ENCODE measurements at regions of chr12 and their contacts with region 1.

Region 1: GRCh38 chr12:94762259-94762942 is 112.0 kb upstream of the TMCC3 start:
- DNase-seq: peak in 1 of 2 experiments; percentile 18
- ATAC-seq: no peak; a peak in 1 of 6 replicates
- H3K4me3 ChIP-seq: no peak overlapping the region
- H3K27ac ChIP-seq: no peak overlapping the region
- H3K4me1 ChIP-seq: peaks cover 10% of the 10 kb centered on the region; the same call in 2 of the 3 replicates
- CTCF ChIP-seq: no peak
- EP300 ChIP-seq: no peak
- POLR2A ChIP-seq: no peak
- RAD21 ChIP-seq: no peak

Region 2: DNA sequence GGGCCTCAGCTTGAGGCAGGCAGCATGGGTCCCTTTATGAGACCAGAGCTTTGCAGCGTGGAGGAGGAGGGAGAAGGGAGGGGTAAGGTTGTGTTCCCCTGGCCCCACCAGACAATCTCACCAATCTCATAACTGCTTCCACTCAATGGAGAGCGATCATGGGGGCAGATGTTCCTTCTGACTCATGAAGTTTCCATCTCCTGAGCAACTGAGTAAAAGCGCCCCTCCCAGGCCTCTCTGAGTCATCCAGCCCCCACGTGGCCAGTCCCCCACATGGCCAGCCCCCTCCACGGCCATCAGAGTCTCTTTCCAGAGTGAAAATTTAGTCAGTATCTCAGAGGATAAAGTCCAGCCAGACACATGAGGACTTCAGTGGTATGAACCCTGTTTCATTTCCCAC is 653.2 kb before region 1 on chr12:
- CTCF ChIA-PET with region 1: no interaction called
- POLR2A ChIA-PET with region 1: no interaction called
- DNase-seq: no peak
- ATAC-seq: no peak
- H3K4me3 ChIP-seq: no peak overlapping the region
- H3K27ac ChIP-seq: no peak overlapping the region
- H3K4me1 ChIP-seq: peaks cover 7% of the 10 kb centered on the region; the same call in 1 of the 3 replicates
- CTCF ChIP-seq: no peak
- EP300 ChIP-seq: no peak
- POLR2A ChIP-seq: no peak
- RAD21 ChIP-seq: no peak

Region 3: GRCh38 chr12:94545935-94546771 is 216.2 kb before region 1 on chr12:
- CTCF ChIA-PET with region 1: interaction called, 15 read pairs
- POLR2A ChIA-PET with region 1: no interaction called
- DNase-seq: peak; percentile 70 to 75
- ATAC-seq: peak; percentile 90 to 98
- H3K4me3 ChIP-seq: no peak overlapping the region
- H3K27ac ChIP-seq: no peak overlapping the region
- H3K4me1 ChIP-seq: no peaks in the 10 kb centered on the region
- CTCF ChIP-seq: peak; percentile 56
- EP300 ChIP-seq: no peak
- POLR2A ChIP-seq: no peak
- RAD21 ChIP-seq: peak; percentile 79 to 91

Region 4: DNA sequence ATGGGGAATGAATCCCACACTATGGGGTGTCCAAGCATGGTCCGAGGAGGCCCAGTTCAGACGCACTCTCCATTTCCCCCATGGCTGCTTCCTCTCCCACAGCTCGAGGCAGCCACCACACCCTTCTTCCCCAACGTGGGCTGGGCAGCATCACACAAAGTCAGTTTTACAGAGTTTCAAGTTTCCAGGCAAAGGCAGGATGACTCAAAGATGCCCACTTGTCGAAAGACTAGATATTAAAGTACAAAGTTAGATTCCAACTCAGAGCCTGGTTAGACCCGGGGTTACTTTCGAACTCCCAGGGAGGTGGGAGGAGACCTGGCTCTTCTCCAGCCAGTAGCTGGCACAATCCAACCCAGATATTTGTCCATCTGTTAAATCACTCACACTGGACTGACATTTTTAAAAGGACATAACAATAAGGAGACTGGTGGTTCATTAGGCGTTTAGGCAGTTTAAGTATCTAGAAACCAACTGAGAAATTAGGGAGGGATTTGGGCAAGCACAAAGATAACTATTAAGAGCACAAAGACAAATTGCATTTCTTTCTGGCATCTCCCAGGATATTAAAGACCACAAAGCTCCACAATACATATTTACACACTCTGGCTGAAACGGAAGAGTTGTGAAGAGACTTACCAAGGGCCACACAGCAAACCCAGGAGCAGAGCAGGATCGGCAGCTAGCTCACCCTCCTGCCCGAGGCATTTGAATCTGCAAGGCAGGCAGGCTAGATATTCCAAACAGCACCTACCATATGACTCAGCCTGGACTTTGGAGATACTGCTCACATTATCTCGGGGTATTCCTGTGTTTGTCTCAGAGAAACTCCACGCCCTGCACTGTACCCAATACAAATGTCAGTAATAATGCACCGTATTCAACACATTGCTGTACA is 146.9 kb before region 1 on chr12:
- CTCF ChIA-PET with region 1: no interaction called
- POLR2A ChIA-PET with region 1: no interaction called
- DNase-seq: peak; percentile 53 to 61
- ATAC-seq: peak; percentile 75 to 83
- H3K4me3 ChIP-seq: peak overlapping the region; percentile 25
- H3K27ac ChIP-seq: peak overlapping the region; percentile 57 to 81
- H3K4me1 ChIP-seq: peaks cover 35% of the 10 kb centered on the region
- CTCF ChIP-seq: no peak
- EP300 ChIP-seq: no peak
- POLR2A ChIP-seq: no peak
- RAD21 ChIP-seq: no peak

Region 5: GRCh38 chr12:94775710-94776109 is 13.3 kb after region 1 on chr12:
- CTCF ChIA-PET with region 1: interaction called, 12 read pairs
- POLR2A ChIA-PET with region 1: no interaction called
- DNase-seq: no peak
- ATAC-seq: no peak
- H3K4me3 ChIP-seq: no peak overlapping the region
- H3K27ac ChIP-seq: no peak overlapping the region
- H3K4me1 ChIP-seq: no peaks in the 10 kb centered on the region
- CTCF ChIP-seq: no peak
- EP300 ChIP-seq: no peak
- POLR2A ChIP-seq: no peak
- RAD21 ChIP-seq: no peak